ENCODE measurements at regions of chr15 and their contacts with region 1.

Region 1: GRCh38 chr15:51227940-51228783 is 110.2 kb downstream of the CYP19A1 start:
- DNase-seq: peak; percentile 75 to 81
- ATAC-seq: peak; percentile 75
- H3K4me3 ChIP-seq: no peak overlapping the region
- H3K27ac ChIP-seq: peak overlapping the region; percentile 44 to 51
- H3K4me1 ChIP-seq: peaks cover 3 to 9% of the 10 kb centered on the region in 2 donors
- H3K27me3 ChIP-seq: no peaks in the 10 kb centered on the region

Region 2: DNA sequence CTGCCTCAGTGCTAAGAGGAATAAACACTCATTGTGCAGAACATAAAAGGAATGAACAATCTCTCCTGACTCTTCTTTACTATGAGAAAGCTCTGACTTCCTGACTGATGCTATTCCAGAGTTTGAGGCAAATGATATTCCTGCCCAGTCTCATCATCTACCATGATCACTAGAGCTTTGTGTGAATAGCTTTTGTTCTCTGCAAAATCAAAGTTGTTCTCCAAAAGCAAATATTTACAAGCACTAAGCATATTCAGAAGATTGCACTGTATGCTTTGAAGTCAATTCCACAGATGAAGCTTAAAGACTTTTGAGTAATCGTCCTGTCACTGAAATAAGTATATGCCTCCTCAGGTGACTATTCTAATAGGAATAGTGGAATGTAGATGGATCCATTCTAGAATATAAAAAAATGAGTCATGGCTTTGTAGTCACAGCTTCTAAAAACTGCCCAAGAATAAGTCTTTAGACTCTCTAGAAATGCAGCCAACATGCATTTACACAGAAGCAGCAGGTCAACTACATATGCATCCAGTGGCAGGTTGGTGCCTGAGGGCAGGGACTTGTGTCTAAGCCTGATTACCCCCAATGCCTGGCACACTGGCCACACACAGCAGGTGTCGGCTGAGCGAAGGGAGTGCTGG is 168.0 kb before region 1 on chr15:
- intact Hi-C with region 1: no loop called
- DNase-seq: no peak
- ATAC-seq: no peak
- H3K4me3 ChIP-seq: no peak overlapping the region
- H3K27ac ChIP-seq: no peak overlapping the region
- H3K4me1 ChIP-seq: no peaks in the 10 kb centered on the region
- H3K27me3 ChIP-seq: no peaks in the 10 kb centered on the region

Region 3: GRCh38 chr15:51192521-51193280 is 35.5 kb before region 1 on chr15:
- intact Hi-C with region 1: loop called in 1 of 2 experiments (anchors 5 kb)
- DNase-seq: peak; percentile 94 to 97
- ATAC-seq: peak; percentile 92
- H3K4me3 ChIP-seq: no peak overlapping the region
- H3K27ac ChIP-seq: peak overlapping the region; percentile 33 to 68
- H3K4me1 ChIP-seq: peaks cover 4 to 7% of the 10 kb centered on the region in 2 donors
- H3K27me3 ChIP-seq: no peaks in the 10 kb centered on the region

Region 4: DNA sequence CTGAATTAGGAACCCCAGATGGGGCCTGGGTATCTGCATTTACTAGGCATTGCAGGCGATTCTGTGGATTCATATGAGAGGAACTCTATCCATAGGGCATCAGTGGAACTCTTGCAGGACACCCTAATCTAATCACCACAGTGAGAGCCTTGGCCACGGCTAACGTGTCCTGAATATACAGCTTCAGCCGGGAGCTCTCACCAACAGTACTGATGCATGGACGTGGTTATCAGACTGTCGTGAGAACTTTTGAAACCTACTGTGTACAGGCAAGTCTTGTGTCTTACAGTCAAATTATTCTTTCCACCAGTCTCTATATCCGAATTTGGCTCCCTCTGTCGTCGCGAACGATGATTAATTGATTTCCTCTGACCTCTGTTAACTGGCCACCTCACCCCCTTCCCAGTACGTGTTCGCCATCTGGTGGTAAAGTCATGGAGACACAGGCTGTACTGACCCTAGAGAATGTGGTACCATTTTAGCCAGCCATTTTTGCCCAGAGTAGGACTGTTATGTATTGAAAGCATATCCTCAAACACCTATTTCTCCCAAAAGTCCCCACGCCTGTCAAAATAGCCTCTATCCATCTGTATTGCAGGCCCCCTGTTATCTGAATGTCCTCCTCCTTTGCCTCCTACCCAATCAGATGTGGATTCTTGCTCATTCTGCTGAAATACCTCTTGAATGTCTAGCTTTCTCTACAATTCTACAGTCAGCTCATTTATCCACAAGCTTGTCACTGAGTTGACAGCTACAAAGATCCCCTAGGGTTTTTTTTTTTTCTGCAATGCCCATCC is 153.0 kb after region 1 on chr15:
- intact Hi-C with region 1: loop called in 1 of 2 experiments (anchors 5 kb)
- DNase-seq: peak in 1 of 2 donors; percentile 69
- ATAC-seq: peak; percentile 92
- H3K4me3 ChIP-seq: no peak overlapping the region
- H3K27ac ChIP-seq: no peak overlapping the region
- H3K4me1 ChIP-seq: no peaks in the 10 kb centered on the region
- H3K27me3 ChIP-seq: no peaks in the 10 kb centered on the region